Right cardiac atrium (tissue), 5 donors: ENCODE measurements at regions of chr11 and their contacts with region 1.

Region 1: DNA sequence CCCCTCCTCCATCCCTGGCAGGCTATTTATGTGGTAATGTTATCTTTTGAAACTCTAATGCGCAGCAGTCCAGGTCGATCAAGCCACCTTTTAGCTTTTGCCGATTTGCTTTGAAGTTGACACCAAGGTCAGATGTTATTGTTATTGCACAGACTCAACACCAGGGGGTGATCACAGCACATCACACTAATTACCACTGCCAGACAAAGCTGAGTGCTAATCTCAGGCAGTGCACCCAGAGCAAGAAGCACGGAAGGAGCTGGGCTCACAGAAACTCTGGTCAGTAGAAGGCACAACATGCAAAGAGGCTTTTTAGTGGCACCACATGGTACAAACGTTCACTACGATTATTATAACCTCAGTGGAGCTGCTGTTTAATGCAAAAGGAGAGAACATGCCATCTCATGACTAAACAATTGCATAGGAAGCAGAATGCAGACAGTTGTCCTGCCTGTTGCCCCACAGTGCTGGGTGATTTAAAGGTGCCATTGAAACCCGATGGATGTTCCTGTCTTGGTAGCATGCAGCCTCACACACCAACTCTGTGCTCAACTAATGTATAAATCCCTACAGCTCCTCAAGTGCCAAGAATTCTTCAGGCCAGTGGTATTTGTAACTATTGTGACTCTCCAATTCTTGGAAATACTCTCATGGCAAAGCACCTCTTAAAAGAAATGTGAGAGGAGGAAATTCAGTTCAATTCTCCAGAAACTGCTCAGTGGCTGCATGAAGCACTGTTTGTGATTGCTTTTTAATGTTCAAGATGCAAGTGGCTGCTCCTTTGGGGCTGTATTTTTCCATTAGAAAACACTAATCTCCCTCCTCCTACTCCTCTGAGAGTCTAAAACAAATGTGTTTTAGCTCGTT is 353.9 kb upstream of the DDI1 start:
- DNase-seq: peak; percentile 41 to 71 (median 65)
- ATAC-seq: peak; percentile 96 to 97
- H3K4me3 ChIP-seq: no peak overlapping the region
- H3K27ac ChIP-seq: no peak overlapping the region
- H3K4me1 ChIP-seq: no peaks in the 10 kb centered on the region
- H3K27me3 ChIP-seq: no peaks in the 10 kb centered on the region

Region 2: DNA sequence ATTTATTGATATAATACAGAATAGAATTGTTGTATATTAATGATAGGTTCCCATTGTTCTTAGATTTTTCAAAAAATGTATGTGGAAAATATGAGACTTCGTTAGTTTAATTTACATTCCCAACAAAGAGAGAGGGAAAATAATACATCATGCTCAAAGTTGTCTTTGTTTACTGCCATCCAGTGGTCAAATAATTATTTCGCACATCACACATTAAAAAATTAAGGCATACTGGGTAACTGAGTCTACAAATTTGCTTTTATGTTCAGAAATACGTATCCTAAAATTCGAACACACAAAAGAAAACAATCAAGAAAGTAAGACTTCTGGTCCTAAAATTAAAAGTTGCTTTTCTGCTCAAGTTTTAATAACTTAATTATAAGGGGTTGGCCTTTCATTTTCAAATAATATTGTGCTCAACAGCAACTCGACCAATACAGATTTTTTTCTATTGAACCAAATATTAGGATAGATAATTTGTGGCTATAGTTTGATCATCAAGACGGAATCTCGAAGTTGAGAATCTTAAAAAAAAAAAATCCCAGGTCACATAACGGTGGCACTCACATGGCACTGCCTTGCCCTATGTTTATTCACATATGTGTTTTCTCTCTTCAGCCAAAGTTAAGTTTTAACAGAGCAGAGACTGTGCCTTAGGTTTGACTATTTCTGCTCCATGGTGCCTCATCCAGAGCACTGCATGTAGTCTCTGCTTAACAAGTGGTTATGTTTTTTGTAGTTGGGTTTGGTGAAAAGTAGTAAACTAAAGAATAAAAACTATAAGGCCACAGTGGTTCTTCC is 469.1 kb after region 1 on chr11:
- intact Hi-C with region 1: loop called in 3 of 4 experiments (anchors 5 to 10 kb)
- DNase-seq: no peak
- ATAC-seq: no peak
- H3K4me3 ChIP-seq: no peak overlapping the region
- H3K27ac ChIP-seq: no peak overlapping the region
- H3K4me1 ChIP-seq: no peaks in the 10 kb centered on the region
- H3K27me3 ChIP-seq: no peaks in the 10 kb centered on the region

Region 3: GRCh38 chr11:104164028-104164520 is 481.5 kb after region 1 on chr11 and contains the start of gene PDGFD:
- intact Hi-C with region 1: loop called in 2 of 4 experiments (anchors 5 to 10 kb)
- DNase-seq: peak; percentile 57 to 89 (median 88)
- ATAC-seq: peak; percentile 95
- H3K4me3 ChIP-seq: peak within 1 kb of the TSS; percentile 71
- H3K27ac ChIP-seq: no peak within 1 kb of the TSS
- H3K4me1 ChIP-seq: no peaks in the 10 kb centered on the region
- H3K27me3 ChIP-seq: no peaks in the 10 kb centered on the region
- total RNA-seq, gene PDGFD: 15.8 to 20.1 (median 16.2) TPM